ENCODE measurements at regions of chr4 and their contacts with region 1.

Region 1: DNA sequence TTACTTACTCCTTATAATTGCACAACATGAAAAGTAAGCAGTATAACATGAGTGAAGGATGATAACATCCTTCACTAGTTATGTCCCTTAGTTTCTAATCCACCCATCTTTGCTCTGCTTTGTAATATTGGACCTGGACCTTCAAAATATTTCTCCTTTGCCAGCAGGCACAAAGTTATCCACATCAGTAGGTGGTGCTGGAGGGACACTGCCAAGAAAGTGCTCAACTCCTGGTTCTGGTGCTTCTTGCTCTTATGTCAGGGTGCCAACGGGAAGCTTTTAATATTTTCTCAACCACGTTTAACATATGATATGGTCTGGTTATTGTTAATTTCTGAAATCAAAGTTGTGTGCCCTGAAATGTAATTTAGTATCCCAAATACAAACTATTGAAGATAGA is 49.1 kb downstream of the TMEM165 start:
- DNase-seq: no peak
- ATAC-seq: peak; percentile 51; the same call in 1 of the 2 replicates
- H3K4me3 ChIP-seq: no peak overlapping the region
- H3K27ac ChIP-seq: no peak overlapping the region
- H3K4me1 ChIP-seq: no peaks in the 10 kb centered on the region
- H3K27me3 ChIP-seq: no peaks in the 10 kb centered on the region
- CTCF ChIP-seq: peak; percentile 66

Region 2: GRCh38 chr4:55554453-55555030 is 109.7 kb after region 1 on chr4:
- CTCF ChIA-PET with region 1: interaction called, 3 read pairs
- POLR2A ChIA-PET with region 1: no interaction called
- in situ Hi-C with region 1: no loop called
- intact Hi-C with region 1: loop called (anchors 10 kb)
- DNase-seq: no peak
- ATAC-seq: no peak; the same call in 1 of the 2 replicates
- H3K4me3 ChIP-seq: no peak overlapping the region
- H3K27ac ChIP-seq: no peak overlapping the region
- H3K4me1 ChIP-seq: peaks cover 7% of the 10 kb centered on the region
- H3K27me3 ChIP-seq: no peaks in the 10 kb centered on the region
- CTCF ChIP-seq: peak; percentile 47; the same call in 1 of the 2 replicates

Region 3: GRCh38 chr4:55736605-55737183 is 291.9 kb after region 1 on chr4:
- CTCF ChIA-PET with region 1: no interaction called
- POLR2A ChIA-PET with region 1: no interaction called
- in situ Hi-C with region 1: no loop called
- intact Hi-C with region 1: loop called (anchors 10 kb)
- DNase-seq: no peak
- ATAC-seq: no peak
- H3K4me3 ChIP-seq: no peak overlapping the region
- H3K27ac ChIP-seq: no peak overlapping the region
- H3K4me1 ChIP-seq: no peaks in the 10 kb centered on the region
- H3K27me3 ChIP-seq: no peaks in the 10 kb centered on the region
- CTCF ChIP-seq: peak; percentile 39; the same call in 1 of the 2 replicates

Measured in Panc1 (cell line).